ENCODE measurements at regions of chr16 and their contacts with region 1.

Region 1: DNA sequence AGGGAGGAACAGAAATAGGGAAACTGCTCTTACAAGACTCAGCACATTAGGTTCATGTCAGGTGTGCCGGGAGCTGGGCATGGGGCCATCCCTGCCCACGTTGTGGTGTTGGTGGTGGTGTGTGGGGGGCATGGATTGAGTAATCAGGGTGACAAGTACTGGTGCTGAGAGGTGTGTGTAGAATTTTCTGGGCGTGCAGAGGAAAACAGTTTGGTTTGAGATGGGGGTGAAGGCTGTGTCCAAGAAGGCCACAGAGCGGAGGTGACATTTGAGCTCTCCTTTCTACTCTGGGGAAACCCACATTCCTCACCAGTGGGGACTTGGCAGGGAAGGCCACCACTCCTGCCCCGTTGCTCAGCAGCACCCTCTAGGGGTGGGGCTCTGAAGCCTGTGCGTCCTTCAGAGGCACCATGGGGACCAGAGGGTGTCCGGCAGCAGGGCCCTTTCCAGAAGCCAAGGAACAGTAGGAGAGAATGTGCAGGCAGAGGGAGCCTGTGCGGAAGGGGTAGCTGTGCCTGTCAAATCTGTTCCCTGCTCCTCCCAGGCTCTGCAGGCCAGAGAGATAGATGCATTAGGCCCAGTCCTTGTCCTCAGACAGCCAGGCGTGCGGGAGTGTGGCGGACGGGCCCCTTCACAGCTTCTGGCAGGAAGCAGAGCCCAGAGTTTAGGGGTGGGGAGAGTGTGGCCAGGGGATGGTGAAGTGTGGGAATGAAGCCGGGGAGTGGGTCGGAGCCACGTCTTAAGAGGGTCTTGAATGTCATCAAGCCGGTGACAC is 48.7 kb upstream of the GSE1 start:
- DNase-seq: peak in 1 of 2 donors; percentile 42
- H3K4me3 ChIP-seq: no peak overlapping the region
- H3K27ac ChIP-seq: peak overlapping the region; percentile 92 to 95 (median 94)
- H3K4me1 ChIP-seq: peaks cover 46 to 78% of the 10 kb centered on the region in 2 donors
- H3K27me3 ChIP-seq: no peaks in the 10 kb centered on the region
- CTCF ChIP-seq: peak in 4 of 6 experiments; percentile 33 to 52 (median 40)
- POLR2A ChIP-seq: no peak

Region 2: DNA sequence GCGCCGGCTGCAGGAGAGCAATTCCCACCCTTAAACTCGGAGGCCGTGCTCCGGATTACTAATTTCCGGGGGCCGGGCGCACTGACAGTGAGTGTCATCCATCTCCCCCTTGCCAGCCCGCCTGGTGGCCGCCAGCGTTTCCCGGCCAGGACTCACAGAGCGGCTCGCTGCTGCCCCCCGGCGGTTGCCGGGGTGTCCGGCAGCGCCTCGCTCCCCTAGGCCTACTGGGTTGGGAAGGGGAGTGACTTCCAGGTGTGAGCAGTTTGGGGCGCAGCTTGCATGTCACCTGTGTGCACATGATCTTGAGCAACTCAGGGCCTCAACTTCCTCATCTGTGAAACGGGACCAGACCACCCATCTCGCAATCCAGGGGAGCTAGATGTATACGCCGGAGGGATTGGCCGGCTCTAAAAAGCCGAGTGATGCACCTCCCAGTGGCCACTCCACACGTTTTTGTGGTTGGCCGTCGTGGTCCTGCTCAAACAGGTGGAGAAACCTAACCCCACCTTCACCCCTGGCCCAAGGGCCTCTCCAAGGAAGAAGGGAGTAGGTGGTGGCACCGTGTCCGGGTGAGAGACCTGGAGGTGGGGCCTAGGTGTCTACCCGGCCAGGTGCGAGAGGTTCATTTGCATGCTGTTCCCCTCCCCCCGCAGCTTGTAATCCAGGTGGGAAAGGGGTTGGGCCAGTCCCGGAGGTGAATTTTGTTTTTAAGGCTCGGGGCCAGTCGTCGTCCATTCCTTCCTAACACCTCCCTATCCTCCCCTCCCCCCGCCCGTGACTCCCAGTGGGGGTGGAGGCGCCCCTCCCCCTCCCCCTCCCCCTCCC is 46.3 kb after region 1 on chr16:
- intact Hi-C with region 1: loop called (anchors 5 kb)
- DNase-seq: peak; percentile 86 to 89
- H3K4me3 ChIP-seq: peak overlapping the region in 1 of 3 donors; percentile 71
- H3K27ac ChIP-seq: peak overlapping the region; percentile 90 to 99 (median 96)
- H3K4me1 ChIP-seq: peaks cover 36 to 69% of the 10 kb centered on the region in 2 donors
- H3K27me3 ChIP-seq: no peaks in the 10 kb centered on the region
- CTCF ChIP-seq: peak; percentile 95 to 99 (median 98)
- POLR2A ChIP-seq: no peak